GM13976 (cell line): ENCODE measurements at regions of chr7 and their contacts with region 1.

Region 1: GRCh38 chr7:136009488-136010079 is 32.4 kb upstream of the MTPN start:
- DNase-seq: peak; percentile 32
- CTCF ChIP-seq: peak; percentile 42

Region 2: DNA sequence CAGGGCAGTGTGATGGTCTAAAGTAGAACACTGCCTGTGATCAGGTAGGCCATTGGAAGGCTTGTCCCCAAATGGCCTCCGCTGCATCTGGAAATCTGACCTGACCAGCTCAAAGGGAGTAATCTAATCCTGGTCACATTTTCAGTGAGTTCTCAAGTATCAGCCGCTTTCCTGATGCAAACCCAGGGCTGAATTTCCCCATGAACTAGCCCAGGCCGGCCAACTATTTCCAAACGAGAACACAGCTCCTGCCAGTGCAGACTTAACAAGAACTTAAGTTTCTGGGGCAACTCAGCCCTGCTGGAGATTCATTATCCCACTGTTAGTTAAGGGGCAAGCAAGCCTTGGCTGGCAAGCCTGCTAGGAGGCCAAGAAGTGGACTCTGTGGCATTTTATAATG is 201.4 kb before region 1 on chr7:
- in situ Hi-C with region 1: loop called (anchors 5 kb)
- DNase-seq: no peak
- CTCF ChIP-seq: no peak